Dendritic cell treated with granulocyte-macrophage colony-stimulating factor and Interleukin-4, amounts not matched to agents 40 ng/mL and 50 ng/mL, for 4 days (primary cell): ENCODE measurements at regions of chr1 and their contacts with region 1.

Region 1: GRCh38 chr1:112882271-112882744 is 73.7 kb downstream of the SLC16A1 start:
- H3K4me3 Mint-ChIP-seq: peak overlapping the region; percentile 43
- H3K27ac Mint-ChIP-seq: peak overlapping the region; percentile 98
- H3K4me1 Mint-ChIP-seq: peaks cover 42% of the 10 kb centered on the region
- H3K27me3 Mint-ChIP-seq: peaks cover 10% of the 10 kb centered on the region

Region 2: DNA sequence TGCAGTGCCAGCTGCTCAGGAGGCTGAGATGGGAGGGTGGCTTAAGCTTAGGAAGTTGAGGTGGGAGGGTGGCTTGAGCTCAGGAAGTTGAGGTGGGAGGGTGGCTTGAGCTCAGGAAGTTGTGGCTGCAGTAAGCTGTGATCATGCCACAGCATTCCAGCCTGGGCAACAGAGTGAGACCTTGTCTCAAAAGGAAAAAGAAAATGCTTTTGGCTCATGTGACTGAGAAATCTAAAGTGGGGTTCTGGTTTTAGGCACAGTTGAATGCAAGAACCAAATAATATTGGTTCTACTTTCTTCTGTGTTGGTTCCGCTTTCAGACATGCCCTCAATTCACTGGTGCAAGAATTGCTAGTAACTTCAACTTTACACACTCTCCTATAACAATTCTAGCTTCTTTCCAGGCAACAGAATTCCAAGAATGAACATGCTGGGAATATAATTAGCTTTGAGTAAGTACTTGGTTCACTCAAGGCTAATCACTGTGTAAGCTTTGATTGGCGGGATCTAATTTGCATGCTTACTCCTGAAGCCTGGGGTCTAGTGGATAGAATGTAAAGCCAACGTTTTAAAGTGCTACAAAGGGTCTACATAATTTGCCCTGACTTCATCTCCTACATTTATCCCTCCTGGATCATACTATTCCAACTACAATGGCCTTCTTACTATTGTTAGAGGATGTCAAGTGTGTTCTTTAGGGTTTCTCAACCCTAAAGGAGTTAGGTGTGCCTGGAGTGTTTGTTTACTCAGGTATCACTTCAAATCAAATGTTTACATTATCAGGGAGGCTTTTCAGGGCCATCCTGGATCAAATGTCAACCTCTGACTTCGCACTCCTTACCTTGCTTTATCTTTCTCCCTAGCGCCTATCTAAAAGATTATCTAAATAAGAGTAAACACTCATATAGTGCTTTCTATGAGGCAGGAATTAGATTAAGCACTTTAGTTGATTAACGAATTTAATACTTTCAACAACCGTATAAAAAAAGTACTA is 41.4 kb before region 1 on chr1:
- intact Hi-C with region 1: loop called (anchors 5 kb)
- H3K4me3 Mint-ChIP-seq: no peak overlapping the region
- H3K27ac Mint-ChIP-seq: peak overlapping the region; percentile 82
- H3K4me1 Mint-ChIP-seq: peaks cover 49% of the 10 kb centered on the region
- H3K27me3 Mint-ChIP-seq: peaks cover 5% of the 10 kb centered on the region

Region 3: DNA sequence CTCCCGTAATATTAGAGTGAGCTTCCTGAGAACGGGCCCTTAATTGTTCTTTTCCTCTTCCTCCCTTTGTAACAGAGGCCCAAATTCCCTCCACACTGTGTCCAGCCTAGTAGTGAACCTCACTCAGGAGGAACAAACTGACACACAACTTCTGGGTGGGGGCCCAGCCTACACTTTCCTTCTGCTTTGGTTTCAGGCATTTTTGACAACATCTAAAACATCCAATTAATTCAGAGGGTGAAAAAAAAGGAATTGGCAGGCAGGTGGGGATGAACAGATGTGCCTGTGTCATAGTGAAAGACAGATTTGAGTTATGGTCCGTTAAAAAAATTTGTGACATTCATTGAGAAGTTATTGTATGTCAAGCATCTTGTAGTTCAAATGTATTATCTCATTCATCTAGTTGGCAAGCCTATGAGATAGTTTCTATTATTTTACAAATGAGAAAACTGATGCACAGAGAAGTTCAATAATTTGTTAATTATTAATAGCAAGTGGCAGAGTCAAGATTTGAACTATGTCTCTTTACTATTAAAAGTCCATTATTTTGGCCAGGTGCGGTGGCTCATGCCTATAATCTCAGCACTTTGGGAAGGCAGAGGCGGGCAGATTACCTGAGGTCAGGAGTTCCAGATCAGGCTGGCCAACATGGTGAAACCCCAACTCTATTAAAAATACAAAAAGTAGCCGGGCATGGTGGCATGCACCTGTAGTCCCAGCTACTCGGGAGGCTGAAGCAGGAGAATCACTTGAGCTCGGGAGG is 149.0 kb after region 1 on chr1:
- intact Hi-C with region 1: no loop called
- H3K4me3 Mint-ChIP-seq: no peak overlapping the region
- H3K27ac Mint-ChIP-seq: peak overlapping the region; percentile 17
- H3K4me1 Mint-ChIP-seq: peaks cover 18% of the 10 kb centered on the region
- H3K27me3 Mint-ChIP-seq: no peaks in the 10 kb centered on the region

Region 4: DNA sequence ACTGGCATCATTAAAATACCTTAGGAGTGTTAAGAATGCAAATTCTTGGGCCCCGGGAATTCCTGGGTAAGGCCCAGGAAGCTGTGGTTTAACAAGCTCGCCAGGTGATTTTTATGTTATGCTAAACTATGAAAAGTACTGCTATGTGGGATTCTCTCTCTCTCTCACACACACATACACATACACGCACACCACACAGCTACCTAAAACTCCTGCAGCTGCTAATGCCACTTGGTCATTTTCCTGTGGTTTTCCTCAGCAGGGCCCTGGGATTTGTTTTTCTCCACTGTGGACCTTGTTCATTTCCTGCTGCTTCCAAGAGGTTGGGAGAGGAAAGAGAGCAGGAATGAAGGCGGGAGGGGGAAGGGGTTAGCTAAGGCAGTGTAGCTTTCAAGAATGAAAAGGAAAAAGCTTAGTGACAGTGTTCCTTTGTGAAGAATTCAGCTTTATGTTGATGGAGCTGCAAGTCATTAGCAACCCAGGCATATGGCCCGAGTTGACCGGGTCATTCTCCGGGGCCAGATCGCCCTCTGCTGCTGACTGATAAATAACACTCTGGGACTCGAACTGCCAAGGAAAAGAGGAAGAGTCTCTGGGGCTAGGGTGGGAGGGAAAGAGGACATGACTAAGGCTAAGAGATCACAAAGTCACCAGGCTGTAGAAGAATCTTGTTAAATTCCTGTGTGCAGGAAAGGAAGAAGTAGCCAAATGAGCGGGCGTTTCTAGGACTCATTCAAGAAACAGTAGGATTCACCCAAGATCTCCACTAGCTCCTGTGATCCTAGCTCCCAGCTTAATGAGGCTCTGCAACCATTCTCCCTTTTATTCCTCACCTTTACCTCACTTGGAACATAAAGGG is 160.2 kb after region 1 on chr1:
- intact Hi-C with region 1: loop called (anchors 1 kb)
- H3K4me3 Mint-ChIP-seq: no peak overlapping the region
- H3K27ac Mint-ChIP-seq: peak overlapping the region; percentile 80
- H3K4me1 Mint-ChIP-seq: peaks cover 42% of the 10 kb centered on the region
- H3K27me3 Mint-ChIP-seq: peaks cover 2% of the 10 kb centered on the region